Activated CD4-positive, alpha-beta memory T cell treated with anti-CD3 and anti-CD28 coated beads for 36 hours (primary cell): ENCODE measurements at regions of chr5 and their contacts with region 1.

Region 1: DNA sequence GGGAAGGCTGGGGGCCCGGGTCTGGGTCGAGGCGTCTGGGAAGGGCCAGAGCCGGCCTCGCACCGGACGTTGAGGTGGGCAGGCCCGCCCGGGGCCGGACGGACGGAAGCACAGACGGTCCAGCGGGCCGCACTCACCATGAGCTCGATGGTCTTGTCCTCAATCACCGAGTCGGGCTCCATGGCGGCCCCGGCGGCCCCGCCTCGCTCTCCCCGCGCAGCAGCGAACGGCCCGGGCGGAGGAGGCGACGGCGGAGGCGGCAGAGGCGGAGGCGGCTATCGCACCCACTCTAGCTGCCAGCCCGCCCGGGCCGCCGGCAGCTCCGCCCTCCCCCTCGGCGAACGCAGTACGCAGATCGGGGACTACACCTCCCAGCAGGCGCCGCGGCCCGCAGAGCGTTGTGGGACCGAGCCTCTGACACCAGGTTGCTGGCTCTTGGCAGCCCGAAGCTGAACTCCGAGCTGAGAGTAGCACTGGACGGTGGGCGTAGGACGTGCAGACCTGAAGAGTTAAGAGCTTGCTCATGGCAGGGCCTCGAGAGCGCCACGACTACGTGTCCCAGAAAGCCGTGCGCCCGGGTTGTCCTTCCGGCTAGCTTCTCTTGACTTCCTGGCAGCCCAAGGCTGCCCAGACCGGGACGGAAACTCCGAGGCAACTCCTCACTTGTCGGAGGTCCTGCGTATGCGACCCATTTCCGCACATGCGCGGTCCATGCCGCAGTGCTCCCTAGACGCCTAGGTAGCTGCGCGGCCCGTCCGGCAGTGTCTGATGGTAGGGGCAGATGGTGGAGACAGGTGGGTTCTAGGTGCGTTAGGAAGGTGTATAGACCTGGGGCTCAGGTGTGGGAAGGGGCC is at the start of gene FBXW11:
- DNase-seq: peak; percentile 97
- H3K4me3 Mint-ChIP-seq: peak within 1 kb of the TSS; percentile 93
- H3K27ac Mint-ChIP-seq: peak within 1 kb of the TSS; percentile 92
- H3K4me1 Mint-ChIP-seq: peaks cover 53% of the 10 kb centered on the region
- H3K27me3 Mint-ChIP-seq: no peaks in the 10 kb centered on the region
- total RNA-seq, gene FBXW11: 47.2 to 47.4 TPM

Region 2: GRCh38 chr5:171387345-171387969 is 619.1 kb before region 1 on chr5 and contains the start of gene NPM1:
- CTCF ChIA-PET with region 1: interaction called, 3 read pairs
- POLR2A ChIA-PET with region 1: interaction called, 12 read pairs
- intact Hi-C with region 1: loop called (anchors 1 kb)
- DNase-seq: peak; percentile 98
- H3K4me3 Mint-ChIP-seq: peak within 1 kb of the TSS; percentile 93
- H3K27ac Mint-ChIP-seq: peak within 1 kb of the TSS; percentile 96
- H3K4me1 Mint-ChIP-seq: peaks cover 39% of the 10 kb centered on the region
- H3K27me3 Mint-ChIP-seq: peaks cover 3% of the 10 kb centered on the region
- total RNA-seq, gene NPM1: 2,483 to 2,592 TPM

Region 3: GRCh38 chr5:171874234-171874633 is 132.3 kb before region 1 on chr5:
- CTCF ChIA-PET with region 1: no interaction called
- POLR2A ChIA-PET with region 1: no interaction called
- intact Hi-C with region 1: no loop called
- DNase-seq: no peak
- H3K4me3 Mint-ChIP-seq: no peak overlapping the region
- H3K27ac Mint-ChIP-seq: no peak overlapping the region
- H3K4me1 Mint-ChIP-seq: no peaks in the 10 kb centered on the region
- H3K27me3 Mint-ChIP-seq: no peaks in the 10 kb centered on the region

Region 4: DNA sequence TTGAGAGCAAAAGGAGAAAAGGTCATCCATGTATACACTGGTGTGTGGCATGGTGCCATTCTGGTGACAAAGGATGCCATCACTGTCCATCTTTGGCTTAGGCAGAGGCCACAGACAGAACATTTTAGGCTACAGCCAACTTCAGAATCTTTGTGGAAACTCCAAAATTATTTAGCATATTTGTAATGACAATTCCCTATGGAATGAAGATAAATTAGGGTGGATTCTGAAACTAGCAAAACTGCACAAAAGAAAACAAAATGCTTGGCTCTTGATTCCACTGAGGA is 92.6 kb before region 1 on chr5:
- CTCF ChIA-PET with region 1: interaction called, 78 read pairs
- POLR2A ChIA-PET with region 1: interaction called, 19 read pairs
- intact Hi-C with region 1: no loop called
- DNase-seq: no peak
- H3K4me3 Mint-ChIP-seq: no peak overlapping the region
- H3K27ac Mint-ChIP-seq: peak overlapping the region; percentile 67
- H3K4me1 Mint-ChIP-seq: peaks cover 38% of the 10 kb centered on the region
- H3K27me3 Mint-ChIP-seq: no peaks in the 10 kb centered on the region

Region 5: GRCh38 chr5:171984748-171985419 is 21.7 kb before region 1 on chr5:
- CTCF ChIA-PET with region 1: interaction called, 6 read pairs
- POLR2A ChIA-PET with region 1: interaction called, 14 read pairs
- intact Hi-C with region 1: loop called (anchors 1 kb)
- DNase-seq: peak; percentile 69
- H3K4me3 Mint-ChIP-seq: no peak overlapping the region
- H3K27ac Mint-ChIP-seq: peak overlapping the region; percentile 52
- H3K4me1 Mint-ChIP-seq: peaks cover 54% of the 10 kb centered on the region
- H3K27me3 Mint-ChIP-seq: no peaks in the 10 kb centered on the region

Region 6: GRCh38 chr5:172065501-172065990 is 59.0 kb after region 1 on chr5:
- CTCF ChIA-PET with region 1: interaction called, 13 read pairs
- POLR2A ChIA-PET with region 1: no interaction called
- intact Hi-C with region 1: loop called (anchors 2 kb)
- DNase-seq: no peak
- H3K4me3 Mint-ChIP-seq: no peak overlapping the region
- H3K27ac Mint-ChIP-seq: no peak overlapping the region
- H3K4me1 Mint-ChIP-seq: peaks cover 50% of the 10 kb centered on the region
- H3K27me3 Mint-ChIP-seq: no peaks in the 10 kb centered on the region

Region 7: DNA sequence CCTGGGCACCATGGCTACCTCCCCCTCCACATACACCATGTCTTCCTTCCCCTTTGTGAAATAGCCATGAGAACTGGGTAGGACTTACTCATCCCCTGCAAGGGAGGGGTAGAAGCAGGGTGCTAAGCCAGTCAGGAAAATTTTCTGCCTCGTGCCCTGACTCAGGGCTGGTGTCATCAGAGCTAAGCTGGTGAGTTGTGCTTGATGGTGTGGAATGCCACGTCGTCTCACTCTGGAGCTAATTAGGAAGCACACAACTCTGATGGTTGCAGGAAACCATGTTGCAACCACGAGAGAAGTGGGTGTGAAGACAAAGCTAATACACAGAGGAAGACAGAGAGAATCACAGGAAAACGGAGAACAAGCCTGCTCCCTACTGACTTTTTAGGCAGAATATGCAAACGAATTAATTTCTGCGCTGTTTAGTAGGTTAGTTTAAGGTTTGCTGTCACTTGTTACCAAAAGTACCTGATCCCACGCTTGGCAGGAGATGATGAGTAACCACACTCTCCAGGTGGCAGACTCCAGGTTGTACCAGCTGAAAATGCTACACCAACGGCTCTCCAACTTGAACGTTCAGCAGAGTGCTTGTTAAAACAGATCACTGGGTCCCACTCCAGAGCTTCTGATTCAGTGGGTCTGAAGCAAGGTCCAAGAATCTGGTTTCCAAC is 126.9 kb after region 1 on chr5:
- CTCF ChIA-PET with region 1: no interaction called
- POLR2A ChIA-PET with region 1: no interaction called
- intact Hi-C with region 1: no loop called
- DNase-seq: peak; percentile 85
- H3K4me3 Mint-ChIP-seq: peak overlapping the region; percentile 43
- H3K27ac Mint-ChIP-seq: peak overlapping the region; percentile 92
- H3K4me1 Mint-ChIP-seq: peaks cover 64% of the 10 kb centered on the region
- H3K27me3 Mint-ChIP-seq: no peaks in the 10 kb centered on the region

Region 8: DNA sequence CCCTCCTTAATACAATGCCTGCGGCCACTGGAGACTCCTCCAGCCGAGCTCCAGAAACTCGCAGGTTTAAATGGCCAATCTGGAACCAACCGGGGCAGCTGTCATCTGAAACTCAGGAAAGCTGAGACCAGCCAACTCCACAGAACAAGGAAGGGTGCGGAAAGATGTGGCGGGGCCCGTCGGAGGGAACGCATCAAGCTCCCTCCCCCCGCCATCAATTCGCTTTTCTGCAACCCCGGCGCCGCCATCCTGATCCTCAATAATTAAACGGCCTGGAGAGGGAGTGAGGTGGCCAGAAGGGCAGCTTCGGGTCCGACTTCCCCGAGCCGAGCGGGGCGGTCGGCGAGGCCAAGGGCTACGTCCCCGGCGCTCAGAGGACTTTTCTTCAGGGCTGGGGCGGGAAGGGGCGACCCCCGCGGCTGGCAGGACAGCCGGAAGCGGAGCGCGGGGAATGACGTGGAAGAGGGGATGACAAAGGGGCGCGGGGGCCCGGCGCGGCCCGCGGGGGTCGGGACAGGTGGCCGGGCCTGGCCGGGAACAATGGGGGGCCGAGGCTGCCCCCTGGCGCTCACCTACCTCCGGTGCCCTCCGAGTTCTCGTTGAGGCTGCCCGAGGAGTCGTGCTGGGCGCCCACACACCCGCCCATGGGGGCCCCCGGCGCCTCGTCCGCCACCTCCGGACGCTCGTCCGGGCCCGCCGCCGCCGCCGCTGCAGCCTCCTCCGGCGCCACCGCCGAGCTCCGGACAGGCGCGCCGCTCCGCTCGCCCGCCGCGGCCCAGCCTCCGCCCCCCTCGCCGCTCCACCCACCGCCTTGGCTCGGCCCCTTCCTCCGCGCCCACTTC is 276.7 kb after region 1 on chr5 and contains the start of gene UBTD2:
- CTCF ChIA-PET with region 1: no interaction called
- POLR2A ChIA-PET with region 1: interaction called, 9 read pairs
- intact Hi-C with region 1: loop called (anchors 5 kb)
- DNase-seq: peak; percentile 83
- H3K4me3 Mint-ChIP-seq: peak within 1 kb of the TSS; percentile 79
- H3K27ac Mint-ChIP-seq: no peak within 1 kb of the TSS
- H3K4me1 Mint-ChIP-seq: peaks cover 26% of the 10 kb centered on the region
- H3K27me3 Mint-ChIP-seq: no peaks in the 10 kb centered on the region
- total RNA-seq, gene UBTD2: 4.6 to 4.9 TPM

Region 9: GRCh38 chr5:173057062-173057924 is 1050.7 kb after region 1 on chr5:
- CTCF ChIA-PET with region 1: no interaction called
- POLR2A ChIA-PET with region 1: no interaction called
- intact Hi-C with region 1: loop called (anchors 2 kb)
- DNase-seq: peak; percentile 100
- H3K4me3 Mint-ChIP-seq: peak overlapping the region; percentile 97
- H3K27ac Mint-ChIP-seq: peak overlapping the region; percentile 97
- H3K4me1 Mint-ChIP-seq: peaks cover 44% of the 10 kb centered on the region
- H3K27me3 Mint-ChIP-seq: no peaks in the 10 kb centered on the region